Motor neuron (in vitro differentiated cells): ENCODE measurements at regions of chr14 and their contacts with region 1.

Region 1: DNA sequence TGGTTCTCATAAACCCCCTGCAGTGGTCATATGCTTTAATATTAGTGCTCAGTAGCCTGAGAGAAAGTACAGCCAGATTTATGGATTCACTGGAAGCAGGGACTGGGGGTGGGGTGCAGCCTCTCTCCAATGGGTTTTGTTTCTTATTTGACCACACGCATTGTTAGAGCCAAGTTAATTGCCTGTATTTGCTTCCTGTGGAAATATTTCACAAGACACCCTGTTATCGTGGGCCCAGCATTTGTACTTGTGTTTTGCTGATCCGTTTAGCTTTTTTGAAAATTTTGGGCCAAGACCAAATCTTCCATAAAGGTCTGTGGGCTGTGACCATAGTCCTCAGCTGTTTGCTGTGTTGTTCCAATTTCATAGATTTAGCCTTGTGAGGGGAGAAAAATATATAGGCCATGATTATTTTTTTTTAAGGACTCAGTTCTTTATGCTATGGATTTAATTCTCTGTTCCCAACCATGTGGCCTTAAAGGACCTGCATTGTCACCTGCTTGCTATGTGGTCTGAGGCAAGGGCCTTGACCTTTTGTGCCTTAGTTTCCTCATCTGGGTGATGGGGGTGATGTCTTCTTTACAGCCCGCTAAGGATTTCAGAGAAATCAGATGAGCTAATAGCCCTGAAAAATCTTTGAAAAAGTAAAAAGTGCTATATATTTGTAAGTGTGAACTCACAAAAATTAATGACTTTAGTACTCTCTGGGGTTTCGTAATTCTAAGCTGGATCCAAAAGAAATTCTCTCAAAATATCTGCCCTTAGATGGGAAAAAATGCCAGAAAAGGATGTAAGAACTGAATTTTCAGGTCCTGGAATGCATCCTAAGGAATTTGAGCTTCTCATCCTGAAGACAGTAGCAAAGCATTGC is 370.2 kb downstream of the DPF3 start:
- ATAC-seq: no peak
- H3K4me3 ChIP-seq: no peak overlapping the region
- H3K27ac ChIP-seq: no peak overlapping the region
- H3K4me1 ChIP-seq: peaks cover 6 to 7% of the 10 kb centered on the region in 2 donors

Region 2: GRCh38 chr14:72904840-72905561 is 381.3 kb after region 1 on chr14:
- in situ Hi-C with region 1: loop called in 5 of 9 experiments (anchors 5 to 25 kb)
- ATAC-seq: peak; percentile 21 to 61 (median 54)
- H3K4me3 ChIP-seq: no peak overlapping the region
- H3K27ac ChIP-seq: no peak overlapping the region
- H3K4me1 ChIP-seq: no peaks in the 10 kb centered on the region